Activated CD8-positive, alpha-beta T cell treated with anti-CD3 and anti-CD28 coated beads, Interleukin-2, amount 10 ng/mL, durations not matched to agents 7 days and 5 days (primary cell): ENCODE measurements at regions of chr12 and their contacts with region 1.

Region 1: GRCh38 chr12:49623142-49623904 is at the start of gene PRPF40B:
- DNase-seq: peak; percentile 87
- ATAC-seq: peak; percentile 88
- H3K4me3 Mint-ChIP-seq: peak within 1 kb of the TSS; percentile 82
- H3K27ac Mint-ChIP-seq: peak within 1 kb of the TSS; percentile 89
- H3K4me1 Mint-ChIP-seq: peaks cover 29% of the 10 kb centered on the region
- H3K27me3 Mint-ChIP-seq: peaks cover 16% of the 10 kb centered on the region
- total RNA-seq, gene PRPF40B: 14.4 to 14.6 TPM

Region 2: GRCh38 chr12:49567611-49568441 is 55.5 kb before region 1 on chr12 and contains the start of gene MCRS1:
- CTCF ChIA-PET with region 1: interaction called, 24 read pairs
- POLR2A ChIA-PET with region 1: interaction called, 3 read pairs
- DNase-seq: peak; percentile 94
- ATAC-seq: peak; percentile 78
- H3K4me3 Mint-ChIP-seq: peak within 1 kb of the TSS; percentile 94
- H3K27ac Mint-ChIP-seq: peak within 1 kb of the TSS; percentile 98
- H3K4me1 Mint-ChIP-seq: peaks cover 68% of the 10 kb centered on the region
- H3K27me3 Mint-ChIP-seq: no peaks in the 10 kb centered on the region
- total RNA-seq, gene MCRS1: 85.9 to 86.1 TPM

Region 3: GRCh38 chr12:49580572-49581535 is 42.5 kb before region 1 on chr12:
- CTCF ChIA-PET with region 1: interaction called, 17 read pairs
- POLR2A ChIA-PET with region 1: no interaction called
- DNase-seq: peak; percentile 77
- ATAC-seq: peak; percentile 92
- H3K4me3 Mint-ChIP-seq: no peak overlapping the region
- H3K27ac Mint-ChIP-seq: no peak overlapping the region
- H3K4me1 Mint-ChIP-seq: peaks cover 14% of the 10 kb centered on the region
- H3K27me3 Mint-ChIP-seq: no peaks in the 10 kb centered on the region

Region 4: GRCh38 chr12:49636979-49637755 is 13.8 kb after region 1 on chr12:
- CTCF ChIA-PET with region 1: interaction called, 59 read pairs
- POLR2A ChIA-PET with region 1: interaction called, 3 read pairs
- DNase-seq: peak; percentile 79
- ATAC-seq: peak; percentile 89
- H3K4me3 Mint-ChIP-seq: no peak overlapping the region
- H3K27ac Mint-ChIP-seq: peak overlapping the region; percentile 28
- H3K4me1 Mint-ChIP-seq: peaks cover 31% of the 10 kb centered on the region
- H3K27me3 Mint-ChIP-seq: no peaks in the 10 kb centered on the region

Region 5: DNA sequence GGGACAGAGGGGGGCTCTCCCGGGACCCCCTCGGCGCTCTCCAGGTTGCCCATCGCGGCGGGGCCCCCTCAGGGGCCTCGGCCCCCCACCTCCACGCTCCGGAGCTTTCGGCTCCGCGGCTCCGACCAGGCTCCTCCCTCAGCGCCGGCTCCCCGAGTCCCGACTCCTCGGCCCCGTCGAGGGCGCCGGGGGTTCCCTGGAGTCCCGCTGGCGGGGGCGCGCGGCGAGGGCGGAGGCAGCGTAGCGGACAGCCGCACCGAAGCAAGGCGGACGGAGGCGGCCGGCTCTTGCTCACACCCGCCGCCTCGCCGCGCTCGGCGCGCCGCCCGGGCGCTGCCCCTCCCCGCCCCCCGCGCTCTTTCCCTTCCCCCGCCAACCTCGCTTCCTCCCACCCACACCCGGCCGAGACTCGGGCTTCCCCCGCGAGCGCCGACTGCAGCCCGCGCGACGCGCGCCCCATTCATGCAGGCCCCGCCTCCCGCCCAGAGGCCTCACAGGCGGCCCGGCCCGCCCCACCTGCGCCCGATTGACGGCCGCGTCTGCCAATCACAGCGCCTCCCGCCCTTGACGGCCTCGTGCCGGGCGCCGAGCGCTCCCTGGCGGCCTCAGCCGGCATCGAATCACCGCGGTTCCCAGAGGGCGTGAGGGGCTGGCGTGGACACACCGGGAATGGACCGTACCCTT is 83.9 kb after region 1 on chr12 and contains the start of gene FMNL3:
- CTCF ChIA-PET with region 1: interaction called, 695 read pairs
- POLR2A ChIA-PET with region 1: no interaction called
- DNase-seq: peak; percentile 98
- ATAC-seq: peak; percentile 96
- H3K4me3 Mint-ChIP-seq: peak within 1 kb of the TSS; percentile 90
- H3K27ac Mint-ChIP-seq: peak within 1 kb of the TSS; percentile 83
- H3K4me1 Mint-ChIP-seq: peaks cover 42% of the 10 kb centered on the region
- H3K27me3 Mint-ChIP-seq: peaks cover 26% of the 10 kb centered on the region
- total RNA-seq, gene FMNL3: 53.5 to 54.5 TPM

Region 6: DNA sequence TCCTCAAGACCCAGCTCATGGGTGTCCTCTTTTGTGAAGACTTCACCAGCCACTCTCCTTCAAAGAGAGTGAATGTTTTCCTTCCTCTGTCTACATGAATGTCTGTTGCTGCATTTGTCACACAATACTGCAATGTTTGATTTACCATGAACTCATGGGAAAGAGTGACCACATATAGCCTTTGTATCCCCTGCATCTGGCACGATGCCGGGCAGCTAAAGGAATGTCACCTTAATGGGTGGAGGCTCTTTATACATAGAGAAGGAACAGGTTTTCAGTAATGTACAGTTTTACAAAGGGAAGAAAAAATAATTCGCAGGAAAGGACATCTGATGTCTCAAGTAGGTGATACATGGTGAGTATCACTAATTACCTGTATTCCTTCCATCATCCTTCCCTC is 231.7 kb after region 1 on chr12:
- CTCF ChIA-PET with region 1: no interaction called
- POLR2A ChIA-PET with region 1: no interaction called
- DNase-seq: no peak
- ATAC-seq: no peak
- H3K4me3 Mint-ChIP-seq: no peak overlapping the region
- H3K27ac Mint-ChIP-seq: no peak overlapping the region
- H3K4me1 Mint-ChIP-seq: no peaks in the 10 kb centered on the region
- H3K27me3 Mint-ChIP-seq: peaks cover 42% of the 10 kb centered on the region